ENCODE measurements at regions of chr17 and their contacts with region 1.

Region 1: DNA sequence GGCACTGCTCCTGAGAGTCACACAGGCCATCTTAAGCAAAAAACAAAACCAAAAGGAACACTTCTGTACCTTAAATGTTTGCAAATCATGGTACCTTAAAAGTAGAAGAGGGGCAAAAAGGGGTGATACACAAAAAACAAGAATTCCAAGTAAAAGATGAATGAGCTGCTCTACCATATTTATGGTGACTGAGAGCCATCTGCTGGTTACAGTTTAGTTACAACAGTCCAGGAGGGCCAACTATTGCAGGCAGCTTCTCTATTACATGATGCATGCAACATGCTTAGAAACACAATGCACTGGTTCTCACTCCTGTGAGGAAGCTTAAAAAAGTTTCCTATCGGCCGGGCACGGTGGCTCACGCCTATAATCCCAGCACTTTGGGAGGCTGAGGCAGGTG is 53.5 kb downstream of the STX8 start:
- DNase-seq: peak in 2 of 4 experiments; percentile 17 to 52
- ATAC-seq: peak; percentile 72
- H3K4me3 ChIP-seq: no peak overlapping the region
- H3K27ac ChIP-seq: no peak overlapping the region
- H3K4me1 ChIP-seq: peaks cover 0 to 3% of the 10 kb centered on the region in 2 experiments; a peak in 2 of 5 replicates
- H3K27me3 ChIP-seq: no peaks in the 10 kb centered on the region
- CTCF ChIP-seq: peak; percentile 27 to 45 (median 35); a peak in 3 of 6 replicates
- EP300 ChIP-seq: no peak
- POLR2A ChIP-seq: no peak
- RAD21 ChIP-seq: peak in 1 of 2 experiments; percentile 73; a peak in 2 of 4 replicates

Region 2: GRCh38 chr17:9402590-9403199 is 119.4 kb before region 1 on chr17:
- CTCF ChIA-PET with region 1: no interaction called
- POLR2A ChIA-PET with region 1: interaction called, 3 read pairs
- in situ Hi-C with region 1: no loop called
- intact Hi-C with region 1: loop called (anchors 5 kb)
- DNase-seq: peak in 2 of 4 experiments; percentile 7 to 26
- ATAC-seq: peak; percentile 56; the same call in 2 of the 3 replicates
- H3K4me3 ChIP-seq: no peak overlapping the region
- H3K27ac ChIP-seq: no peak overlapping the region
- H3K4me1 ChIP-seq: no peaks in the 10 kb centered on the region
- H3K27me3 ChIP-seq: no peaks in the 10 kb centered on the region
- CTCF ChIP-seq: peak; percentile 35 to 46 (median 40); a peak in 3 of 6 replicates
- EP300 ChIP-seq: no peak
- POLR2A ChIP-seq: no peak
- RAD21 ChIP-seq: peak in 1 of 2 experiments; percentile 36; a peak in 2 of 4 replicates

Region 3: DNA sequence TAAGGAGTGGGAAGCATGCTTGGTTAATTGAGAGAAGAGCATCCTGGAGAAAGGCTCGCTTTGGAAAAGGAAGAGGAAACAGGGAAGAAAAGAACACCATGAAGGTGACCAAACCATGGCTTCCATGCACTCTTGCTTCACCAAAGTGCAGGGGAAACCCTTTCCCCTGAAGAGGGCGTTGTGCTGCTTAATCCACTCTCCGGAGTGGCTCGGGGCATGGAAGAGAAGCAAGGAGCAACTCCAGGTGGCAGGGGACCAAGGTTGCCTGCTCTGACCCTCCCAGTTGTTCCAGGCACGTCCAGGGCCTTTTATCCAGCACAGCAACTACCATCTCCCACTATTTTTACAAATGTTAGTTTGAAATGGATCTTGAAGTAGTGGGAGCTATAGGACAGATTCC is 54.6 kb before region 1 on chr17:
- CTCF ChIA-PET with region 1: no interaction called
- POLR2A ChIA-PET with region 1: no interaction called
- in situ Hi-C with region 1: no loop called
- intact Hi-C with region 1: loop called (anchors 2 kb)
- DNase-seq: peak in 2 of 4 experiments; percentile 12 to 21
- ATAC-seq: peak; percentile 50; the same call in 1 of the 3 replicates
- H3K4me3 ChIP-seq: no peak overlapping the region
- H3K27ac ChIP-seq: no peak overlapping the region
- H3K4me1 ChIP-seq: no peaks in the 10 kb centered on the region
- H3K27me3 ChIP-seq: no peaks in the 10 kb centered on the region; a peak in 1 of 5 replicates
- CTCF ChIP-seq: peak; percentile 9 to 32 (median 24); a peak in 2 of 6 replicates
- EP300 ChIP-seq: no peak
- POLR2A ChIP-seq: no peak
- RAD21 ChIP-seq: 0 out of 4 replicates have a peak, but pooled peaks of 1 of the 2 experiments have one; percentile 8

Measured in K562 (cell line).